CD14-positive monocyte (primary cell): ENCODE measurements at regions of chr12 and their contacts with region 1.

Region 1: DNA sequence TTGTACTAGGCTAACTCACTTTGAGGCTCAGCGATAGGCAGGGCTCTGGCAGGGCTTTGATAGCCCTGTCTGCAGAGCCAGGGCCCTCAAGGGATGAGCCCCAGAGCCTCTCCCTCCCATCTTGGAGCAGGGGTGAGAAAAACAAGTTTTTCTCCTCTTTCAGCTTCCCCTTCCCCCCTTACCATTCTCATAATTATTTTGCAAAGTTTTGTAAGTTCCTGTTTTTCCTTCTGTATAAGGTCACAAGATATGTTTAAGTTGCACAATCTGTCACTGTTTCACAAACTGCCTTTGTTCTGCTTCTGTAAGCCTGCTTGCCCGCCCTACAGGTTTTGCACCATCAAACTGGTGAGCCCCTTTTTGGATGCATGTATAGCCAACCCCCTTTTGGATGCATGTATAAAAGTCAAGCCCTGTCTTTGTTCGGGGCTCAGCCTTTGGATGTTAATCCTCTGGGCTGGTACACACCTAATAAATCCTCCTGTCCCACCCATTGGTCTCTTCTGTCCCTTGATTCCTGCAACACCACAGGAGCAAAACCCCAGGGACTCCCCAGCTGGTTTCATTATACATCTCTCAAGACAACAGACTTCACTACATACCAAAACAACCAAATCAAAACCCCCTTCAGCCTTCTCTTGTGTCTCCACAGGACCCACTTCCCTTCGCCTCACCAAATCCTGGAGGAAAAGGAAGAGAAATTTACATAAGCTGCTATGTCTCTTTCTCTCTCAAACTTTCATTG is 52.5 kb upstream of the RESF1 start:
- DNase-seq: peak; percentile 77 to 88 (median 85)
- H3K4me3 ChIP-seq: peak overlapping the region in 1 of 3 experiments; percentile 31
- H3K4me3 Mint-ChIP-seq: no peak overlapping the region
- H3K27ac ChIP-seq: peak overlapping the region; percentile 79 to 85
- H3K27ac Mint-ChIP-seq: peak overlapping the region; percentile 84 to 95 (median 91)
- H3K4me1 ChIP-seq: peaks cover 25% of the 10 kb centered on the region in 2 donors
- H3K4me1 Mint-ChIP-seq: peaks cover 23% of the 10 kb centered on the region
- H3K27me3 ChIP-seq: no peaks in the 10 kb centered on the region
- H3K27me3 Mint-ChIP-seq: no peaks in the 10 kb centered on the region
- CTCF ChIP-seq: no peak

Region 2: DNA sequence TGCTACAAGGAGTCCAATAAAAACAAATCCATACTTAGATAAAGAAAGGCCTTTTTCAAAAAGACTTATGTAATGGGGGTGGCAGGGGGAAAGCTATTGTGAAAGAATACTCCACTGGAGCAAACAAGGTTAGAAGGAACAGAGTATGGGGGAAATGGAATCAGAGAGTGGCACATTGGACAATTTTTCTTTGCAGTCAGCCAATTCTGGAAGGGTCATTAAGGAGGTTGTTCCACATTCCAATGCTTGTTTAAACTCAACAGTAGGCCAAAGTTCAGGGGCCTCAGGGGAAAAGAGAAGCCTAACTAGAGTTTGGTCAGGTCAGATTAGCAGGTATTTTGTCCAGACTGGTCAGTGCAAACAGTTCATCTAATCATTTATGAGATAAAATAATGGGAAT is 52.8 kb before region 1 on chr12:
- intact Hi-C with region 1: loop called (anchors 2 to 10 kb)
- DNase-seq: peak in 2 of 3 donors; percentile 49
- H3K4me3 ChIP-seq: peak overlapping the region in 1 of 3 experiments; percentile 19
- H3K4me3 Mint-ChIP-seq: peak overlapping the region in 1 of 2 donors; percentile 23
- H3K27ac ChIP-seq: peak overlapping the region; percentile 70 to 82
- H3K27ac Mint-ChIP-seq: peak overlapping the region; percentile 90 to 98 (median 96)
- H3K4me1 ChIP-seq: peaks cover 25 to 26% of the 10 kb centered on the region in 2 donors
- H3K4me1 Mint-ChIP-seq: peaks cover 26% of the 10 kb centered on the region
- H3K27me3 ChIP-seq: no peaks in the 10 kb centered on the region
- H3K27me3 Mint-ChIP-seq: no peaks in the 10 kb centered on the region
- CTCF ChIP-seq: no peak

Region 3: GRCh38 chr12:31859232-31859977 is 47.3 kb before region 1 on chr12:
- intact Hi-C with region 1: loop called (anchors 2 to 10 kb)
- DNase-seq: peak; percentile 44 to 88 (median 68)
- H3K4me3 ChIP-seq: peak overlapping the region in 1 of 3 experiments; percentile 12
- H3K4me3 Mint-ChIP-seq: no peak overlapping the region
- H3K27ac ChIP-seq: peak overlapping the region; percentile 46 to 73
- H3K27ac Mint-ChIP-seq: peak overlapping the region; percentile 68 to 92 (median 78)
- H3K4me1 ChIP-seq: peaks cover 10 to 14% of the 10 kb centered on the region in 2 donors
- H3K4me1 Mint-ChIP-seq: peaks cover 21% of the 10 kb centered on the region
- H3K27me3 ChIP-seq: no peaks in the 10 kb centered on the region
- H3K27me3 Mint-ChIP-seq: peaks cover 0 to 1% (median 0%) of the 10 kb centered on the region in 3 donors
- CTCF ChIP-seq: no peak